ENCODE measurements at regions of chr1 and their contacts with region 1.

Region 1: GRCh38 chr1:234980645-234981396 is 147.8 kb downstream of the TOMM20 start:
- DNase-seq: peak; percentile 95
- ATAC-seq: peak; percentile 90
- H3K4me3 ChIP-seq: no peak overlapping the region
- H3K27ac ChIP-seq: peak overlapping the region; percentile 97 to 98
- H3K4me1 ChIP-seq: peaks cover 7 to 10% of the 10 kb centered on the region in 2 donors
- H3K27me3 ChIP-seq: no peaks in the 10 kb centered on the region

Region 2: GRCh38 chr1:234862944-234863515 is 117.8 kb before region 1 on chr1:
- intact Hi-C with region 1: loop called in 1 of 2 experiments (anchors 5 kb)
- DNase-seq: peak; percentile 89 to 90
- ATAC-seq: peak; percentile 79
- H3K4me3 ChIP-seq: no peak overlapping the region
- H3K27ac ChIP-seq: peak overlapping the region; percentile 37 to 90
- H3K4me1 ChIP-seq: no peaks in the 10 kb centered on the region
- H3K27me3 ChIP-seq: no peaks in the 10 kb centered on the region